Activated CD4-positive, alpha-beta memory T cell treated with anti-CD3 and anti-CD28 coated beads for 36 hours (primary cell): ENCODE measurements at regions of chr21 and their contacts with region 1.

Region 1: GRCh38 chr21:36141513-36141925 is 6.6 kb downstream of the CBR3 start:
- DNase-seq: peak; percentile 89
- H3K4me3 Mint-ChIP-seq: no peak overlapping the region
- H3K27ac Mint-ChIP-seq: peak overlapping the region; percentile 64
- H3K4me1 Mint-ChIP-seq: peaks cover 24% of the 10 kb centered on the region
- H3K27me3 Mint-ChIP-seq: no peaks in the 10 kb centered on the region

Region 2: GRCh38 chr21:36125512-36126222 is 15.9 kb before region 1 on chr21:
- CTCF ChIA-PET with region 1: interaction called, 14 read pairs
- POLR2A ChIA-PET with region 1: no interaction called
- intact Hi-C with region 1: no loop called
- DNase-seq: peak; percentile 70
- H3K4me3 Mint-ChIP-seq: no peak overlapping the region
- H3K27ac Mint-ChIP-seq: no peak overlapping the region
- H3K4me1 Mint-ChIP-seq: peaks cover 10% of the 10 kb centered on the region
- H3K27me3 Mint-ChIP-seq: no peaks in the 10 kb centered on the region

Region 3: DNA sequence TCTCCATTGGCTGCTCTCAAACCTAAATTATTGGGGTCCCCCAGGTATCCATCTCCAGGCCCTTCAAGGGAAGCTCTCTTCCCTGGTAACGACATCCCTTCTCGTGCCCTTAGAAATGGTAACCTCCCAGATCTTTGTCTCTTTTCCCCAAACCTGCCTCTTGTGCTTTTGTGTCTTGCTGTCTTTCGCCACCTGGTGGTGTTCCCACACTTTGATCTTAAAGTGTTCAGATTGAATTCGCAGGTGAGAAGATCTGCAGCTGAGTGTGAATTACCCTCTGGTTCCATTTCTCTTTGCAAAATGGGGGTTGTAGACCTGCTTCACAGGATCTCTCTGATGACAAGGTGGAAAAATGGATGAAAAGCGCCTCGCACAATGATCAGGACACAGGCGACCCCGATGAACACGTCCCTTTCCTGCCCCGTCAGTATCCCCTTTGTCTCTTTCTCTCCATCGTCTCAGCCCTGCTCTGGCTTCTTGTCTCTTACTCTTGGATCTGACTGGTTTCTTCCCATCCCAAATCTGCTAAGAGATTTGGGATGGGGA is 68.2 kb after region 1 on chr21:
- CTCF ChIA-PET with region 1: interaction called, 37 read pairs
- POLR2A ChIA-PET with region 1: no interaction called
- intact Hi-C with region 1: loop called (anchors 1 kb)
- DNase-seq: peak; percentile 62
- H3K4me3 Mint-ChIP-seq: no peak overlapping the region
- H3K27ac Mint-ChIP-seq: no peak overlapping the region
- H3K4me1 Mint-ChIP-seq: peaks cover 25% of the 10 kb centered on the region
- H3K27me3 Mint-ChIP-seq: no peaks in the 10 kb centered on the region

Region 4: GRCh38 chr21:36330904-36331303 is 189.4 kb after region 1 on chr21:
- CTCF ChIA-PET with region 1: interaction called, 15 read pairs
- POLR2A ChIA-PET with region 1: no interaction called
- intact Hi-C with region 1: loop called (anchors 1 kb)
- DNase-seq: peak; percentile 63
- H3K4me3 Mint-ChIP-seq: no peak overlapping the region
- H3K27ac Mint-ChIP-seq: peak overlapping the region; percentile 61
- H3K4me1 Mint-ChIP-seq: peaks cover 46% of the 10 kb centered on the region
- H3K27me3 Mint-ChIP-seq: no peaks in the 10 kb centered on the region

Region 5: GRCh38 chr21:36504067-36505058 is 362.8 kb after region 1 on chr21:
- CTCF ChIA-PET with region 1: no interaction called
- POLR2A ChIA-PET with region 1: no interaction called
- intact Hi-C with region 1: loop called (anchors 5 kb)
- DNase-seq: peak; percentile 33
- H3K4me3 Mint-ChIP-seq: no peak overlapping the region
- H3K27ac Mint-ChIP-seq: no peak overlapping the region
- H3K4me1 Mint-ChIP-seq: no peaks in the 10 kb centered on the region
- H3K27me3 Mint-ChIP-seq: peaks cover 7% of the 10 kb centered on the region